Vagina (tissue), 2 donors: ENCODE measurements at regions of chr9 and their contacts with region 1.

Region 1: GRCh38 chr9:90287567-90288274 is 354.9 kb downstream of the DIRAS2 start:
- DNase-seq: no peak
- H3K4me3 ChIP-seq: no peak overlapping the region
- H3K27ac ChIP-seq: no peak overlapping the region
- H3K4me1 ChIP-seq: no peaks in the 10 kb centered on the region
- H3K27me3 ChIP-seq: no peaks in the 10 kb centered on the region
- CTCF ChIP-seq: no peak
- POLR2A ChIP-seq: no peak

Region 2: DNA sequence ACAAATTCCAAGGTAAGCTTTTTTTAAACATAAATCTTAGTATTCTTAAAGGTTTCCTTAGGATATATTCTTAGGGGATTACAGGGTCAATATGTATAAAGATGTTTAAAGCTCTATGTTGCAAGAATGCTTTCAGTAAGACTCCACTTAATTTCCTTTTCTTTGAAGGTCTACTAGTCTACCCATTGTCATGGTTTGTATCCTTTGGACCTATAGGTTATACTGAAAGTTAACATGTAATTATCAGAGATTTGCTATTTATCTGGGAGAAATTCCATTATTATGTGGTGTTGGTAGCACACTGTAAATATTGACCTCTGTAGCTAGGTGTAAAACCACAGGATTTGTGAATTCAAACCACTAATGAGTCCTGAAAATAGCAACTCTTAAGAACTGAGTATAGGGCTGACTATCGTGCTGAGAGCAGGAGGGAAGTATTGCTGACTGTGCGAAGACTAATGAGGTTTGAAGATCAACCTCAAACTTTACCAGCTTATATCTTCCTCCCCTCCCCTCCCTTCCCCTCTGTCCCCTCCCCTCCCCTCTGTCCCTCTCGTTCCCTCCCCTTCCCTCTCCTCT is 597.3 kb before region 1 on chr9:
- intact Hi-C with region 1: loop called (anchors 5 kb)
- DNase-seq: no peak
- H3K4me3 ChIP-seq: no peak overlapping the region
- H3K27ac ChIP-seq: no peak overlapping the region
- H3K4me1 ChIP-seq: peaks cover 12% of the 10 kb centered on the region
- H3K27me3 ChIP-seq: no peaks in the 10 kb centered on the region
- CTCF ChIP-seq: no peak
- POLR2A ChIP-seq: no peak